A673 (cell line): ENCODE measurements at regions of chr10 and their contacts with region 1.

Region 1: GRCh38 chr10:78199005-78199404 is 165.3 kb downstream of the RPS24 start:
- DNase-seq: peak; percentile 35
- H3K4me3 ChIP-seq: no peak overlapping the region
- H3K27ac ChIP-seq: no peak overlapping the region
- H3K4me1 ChIP-seq: peaks cover 5% of the 10 kb centered on the region
- H3K27me3 ChIP-seq: no peaks in the 10 kb centered on the region
- CTCF ChIP-seq: no peak

Region 2: DNA sequence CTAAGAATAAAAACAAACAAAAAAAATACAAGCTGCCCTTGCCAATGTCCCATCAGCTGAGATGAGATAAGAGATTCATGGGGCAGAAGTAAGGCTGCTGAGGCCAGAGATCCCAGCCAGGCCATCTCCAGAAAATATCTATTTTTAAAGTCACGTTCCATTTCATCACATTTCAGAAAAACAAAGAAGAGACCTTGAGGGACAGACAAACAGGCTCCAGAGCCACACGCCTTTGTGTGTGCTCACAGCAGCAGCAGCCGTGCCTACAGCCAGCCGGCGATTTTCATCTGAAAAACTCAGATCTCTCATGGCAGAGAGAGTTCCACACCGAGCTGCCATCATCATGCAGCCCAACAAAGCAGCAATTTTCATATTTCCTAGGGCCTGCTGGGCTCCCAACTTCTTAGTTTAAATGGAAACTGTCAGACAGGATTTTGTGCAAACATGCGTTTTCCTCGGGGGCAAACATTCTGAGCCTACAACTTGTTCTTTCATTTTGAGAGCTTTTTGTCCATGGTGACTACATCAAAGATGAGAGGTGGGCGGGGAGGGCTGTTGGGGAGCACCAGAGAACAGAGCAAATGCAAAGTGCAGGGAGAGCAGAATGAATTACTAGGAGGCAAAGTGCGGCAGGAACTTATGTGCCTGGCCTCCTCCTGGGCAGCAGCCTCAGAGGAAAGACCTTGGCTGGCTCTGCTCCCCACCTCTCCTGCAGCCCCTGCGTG is 311.2 kb before region 1 on chr10:
- CTCF ChIA-PET with region 1: no interaction called
- POLR2A ChIA-PET with region 1: no interaction called
- intact Hi-C with region 1: no loop called
- DNase-seq: peak; percentile 31
- H3K4me3 ChIP-seq: peak overlapping the region; percentile 21
- H3K27ac ChIP-seq: peak overlapping the region; percentile 61
- H3K4me1 ChIP-seq: peaks cover 29% of the 10 kb centered on the region
- H3K27me3 ChIP-seq: no peaks in the 10 kb centered on the region
- CTCF ChIP-seq: no peak

Region 3: DNA sequence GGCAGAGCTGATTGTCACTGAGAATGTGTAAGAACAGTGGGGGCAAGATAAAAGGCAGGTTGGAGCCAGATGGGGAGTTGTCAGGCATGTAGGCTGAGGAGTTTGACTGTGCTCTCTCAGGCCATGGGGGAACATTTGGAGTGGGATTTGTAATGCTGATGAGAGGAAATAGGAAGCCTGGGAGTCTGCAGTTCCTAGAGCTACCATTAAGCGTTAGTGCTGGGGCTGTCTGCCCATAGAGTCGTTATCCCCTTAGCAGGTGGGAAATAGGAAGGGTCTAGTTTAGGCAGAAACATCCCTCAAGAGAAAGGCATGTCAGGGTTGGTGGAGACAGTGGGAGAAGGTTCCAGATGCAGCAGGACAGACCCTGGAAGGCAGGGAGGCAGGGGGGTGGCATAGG is 89.8 kb before region 1 on chr10:
- CTCF ChIA-PET with region 1: no interaction called
- POLR2A ChIA-PET with region 1: interaction called, 16 read pairs
- intact Hi-C with region 1: no loop called
- DNase-seq: no peak
- H3K4me3 ChIP-seq: no peak overlapping the region
- H3K27ac ChIP-seq: no peak overlapping the region
- H3K4me1 ChIP-seq: no peaks in the 10 kb centered on the region
- H3K27me3 ChIP-seq: no peaks in the 10 kb centered on the region
- CTCF ChIP-seq: no peak